GM12878 (cell line): ENCODE measurements at regions of chr2 and their contacts with region 1.

Region 1: DNA sequence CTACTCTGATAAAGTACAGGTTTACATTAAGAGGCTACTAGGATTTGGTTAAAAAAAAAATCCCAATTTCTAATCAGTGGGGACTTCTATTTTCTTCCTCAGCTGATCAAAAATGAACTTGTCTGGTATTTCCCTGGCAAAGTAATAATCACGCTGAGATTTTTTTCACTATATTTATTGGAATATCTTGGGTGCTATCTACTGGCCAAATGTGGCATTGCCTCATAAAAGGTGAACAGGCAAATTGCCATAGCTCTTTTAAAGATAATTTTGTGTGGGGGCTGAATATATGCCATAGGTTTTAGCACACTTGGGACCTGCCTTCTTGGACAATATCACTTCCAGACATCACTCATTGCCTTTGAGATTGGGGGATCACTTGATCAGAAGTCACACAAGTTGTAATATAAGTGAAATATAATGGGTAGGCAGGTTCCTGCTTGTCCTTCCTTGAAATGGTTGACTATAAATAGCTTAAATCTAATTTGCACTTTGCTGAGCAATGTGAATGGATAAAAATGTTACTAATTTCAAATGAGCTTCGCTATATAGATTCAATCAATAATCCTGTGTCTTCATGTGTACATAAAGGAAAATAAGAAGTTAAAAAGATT is 7.0 kb upstream of the NXPH2 start:
- DNase-seq: no peak
- ATAC-seq: peak; percentile 54
- H3K4me3 ChIP-seq: no peak overlapping the region
- H3K27ac ChIP-seq: no peak overlapping the region
- H3K4me1 ChIP-seq: no peaks in the 10 kb centered on the region
- H3K27me3 ChIP-seq: no peaks in the 10 kb centered on the region
- CTCF ChIP-seq: peak; percentile 51 to 62 (median 56); a peak in 5 of 6 replicates
- EP300 ChIP-seq: no peak
- POLR2A ChIP-seq: no peak
- RAD21 ChIP-seq: peak; percentile 78

Region 2: GRCh38 chr2:137865954-137866540 is 921.1 kb before region 1 on chr2:
- CTCF ChIA-PET with region 1: interaction called, 20 read pairs
- POLR2A ChIA-PET with region 1: no interaction called
- RAD21 ChIA-PET with region 1: interaction called, 5 read pairs
- SMC1A ChIA-PET with region 1: interaction called, 6 read pairs
- in situ Hi-C with region 1: no loop called
- intact Hi-C with region 1: loop called (anchors 1 kb)
- DNase-seq: no peak
- ATAC-seq: peak; percentile 89
- H3K4me3 ChIP-seq: no peak overlapping the region
- H3K27ac ChIP-seq: no peak overlapping the region
- H3K4me1 ChIP-seq: no peaks in the 10 kb centered on the region
- H3K27me3 ChIP-seq: no peaks in the 10 kb centered on the region
- CTCF ChIP-seq: peak; percentile 66 to 79 (median 67); a peak in 5 of 6 replicates
- EP300 ChIP-seq: no peak
- POLR2A ChIP-seq: no peak
- RAD21 ChIP-seq: peak; percentile 81

Region 3: GRCh38 chr2:137910641-137911040 is 876.5 kb before region 1 on chr2:
- CTCF ChIA-PET with region 1: interaction called, 64 read pairs
- POLR2A ChIA-PET with region 1: no interaction called
- RAD21 ChIA-PET with region 1: interaction called, 33 read pairs
- SMC1A ChIA-PET with region 1: interaction called, 30 read pairs
- in situ Hi-C with region 1: no loop called
- intact Hi-C with region 1: loop called (anchors 1 kb)
- DNase-seq: no peak
- ATAC-seq: no peak
- H3K4me3 ChIP-seq: no peak overlapping the region
- H3K27ac ChIP-seq: no peak overlapping the region
- H3K4me1 ChIP-seq: no peaks in the 10 kb centered on the region
- H3K27me3 ChIP-seq: no peaks in the 10 kb centered on the region; a peak in 1 of 4 replicates
- CTCF ChIP-seq: peak; percentile 28 to 53 (median 28); a peak in 4 of 6 replicates
- EP300 ChIP-seq: no peak
- POLR2A ChIP-seq: no peak
- RAD21 ChIP-seq: peak; percentile 62

Region 4: DNA sequence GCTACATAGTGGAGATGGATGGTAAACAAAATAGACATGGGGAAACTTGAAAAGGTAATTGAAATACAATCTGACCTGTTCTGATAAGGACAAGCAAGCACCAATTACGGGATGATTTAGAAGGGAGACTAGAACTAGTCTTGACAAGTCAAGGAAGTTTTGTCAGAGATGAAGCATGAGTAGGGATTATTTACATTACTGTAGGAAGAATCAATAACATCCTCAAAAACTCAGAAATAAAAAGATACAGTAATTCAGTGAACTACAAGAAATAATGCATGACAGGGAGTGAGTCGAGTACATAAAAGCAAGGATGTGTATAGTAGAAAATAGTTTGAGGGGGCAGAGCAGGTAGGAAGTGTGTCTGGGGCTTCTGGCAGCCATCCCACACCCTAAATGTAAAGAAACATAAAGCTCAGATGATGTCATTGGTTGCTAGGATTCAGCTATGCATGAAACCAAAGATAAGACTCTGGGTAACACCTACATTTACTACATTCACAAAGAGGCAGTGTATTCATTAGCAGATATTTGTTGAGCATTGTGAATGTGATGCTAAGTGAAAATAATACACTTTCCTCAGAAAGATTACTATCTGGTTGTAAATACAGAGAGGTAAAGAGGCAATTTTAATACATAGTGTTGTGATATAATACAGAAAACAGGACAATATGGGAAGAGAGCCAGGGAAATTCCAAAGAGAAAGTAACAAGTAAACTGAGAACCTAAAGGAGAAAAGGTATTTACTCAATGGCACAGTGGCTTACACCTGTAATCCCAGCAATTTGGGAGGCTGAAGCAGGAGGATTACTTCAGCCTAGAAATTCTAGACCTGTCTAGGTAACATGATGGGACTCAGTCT is 664.8 kb before region 1 on chr2:
- CTCF ChIA-PET with region 1: no interaction called
- POLR2A ChIA-PET with region 1: no interaction called
- RAD21 ChIA-PET with region 1: no interaction called
- SMC1A ChIA-PET with region 1: no interaction called
- in situ Hi-C with region 1: no loop called
- intact Hi-C with region 1: loop called (anchors 10 kb)
- DNase-seq: no peak
- ATAC-seq: peak; percentile 89
- H3K4me3 ChIP-seq: no peak overlapping the region
- H3K27ac ChIP-seq: no peak overlapping the region
- H3K4me1 ChIP-seq: no peaks in the 10 kb centered on the region
- H3K27me3 ChIP-seq: no peaks in the 10 kb centered on the region
- CTCF ChIP-seq: no peak
- EP300 ChIP-seq: no peak
- POLR2A ChIP-seq: no peak
- RAD21 ChIP-seq: no peak

Region 5: GRCh38 chr2:138373993-138374408 is 413.2 kb before region 1 on chr2:
- CTCF ChIA-PET with region 1: interaction called, 10 read pairs
- POLR2A ChIA-PET with region 1: no interaction called
- RAD21 ChIA-PET with region 1: no interaction called
- SMC1A ChIA-PET with region 1: interaction called, 5 read pairs
- in situ Hi-C with region 1: no loop called
- intact Hi-C with region 1: loop called (anchors 5 kb)
- DNase-seq: peak; percentile 12
- ATAC-seq: peak; percentile 72
- H3K4me3 ChIP-seq: no peak overlapping the region
- H3K27ac ChIP-seq: no peak overlapping the region
- H3K4me1 ChIP-seq: no peaks in the 10 kb centered on the region
- H3K27me3 ChIP-seq: no peaks in the 10 kb centered on the region
- CTCF ChIP-seq: peak; percentile 49 to 66 (median 59)
- EP300 ChIP-seq: no peak
- POLR2A ChIP-seq: no peak
- RAD21 ChIP-seq: peak; percentile 86

Region 6: GRCh38 chr2:138486363-138487198 is 300.6 kb before region 1 on chr2:
- CTCF ChIA-PET with region 1: interaction called, 5 read pairs
- POLR2A ChIA-PET with region 1: no interaction called
- RAD21 ChIA-PET with region 1: interaction called, 7 read pairs
- SMC1A ChIA-PET with region 1: interaction called, 3 read pairs
- in situ Hi-C with region 1: no loop called
- intact Hi-C with region 1: loop called (anchors 5 kb)
- DNase-seq: no peak
- ATAC-seq: peak; percentile 48; the same call in 2 of the 3 replicates
- H3K4me3 ChIP-seq: no peak overlapping the region
- H3K27ac ChIP-seq: no peak overlapping the region
- H3K4me1 ChIP-seq: no peaks in the 10 kb centered on the region
- H3K27me3 ChIP-seq: no peaks in the 10 kb centered on the region
- CTCF ChIP-seq: peak; percentile 19 to 21 (median 21); a peak in 4 of 6 replicates
- EP300 ChIP-seq: no peak
- POLR2A ChIP-seq: no peak
- RAD21 ChIP-seq: peak; percentile 31; the same call in 1 of the 2 replicates